WTC11 (cell line): ENCODE measurements at regions of chr17 and their contacts with region 1.

Region 1: GRCh38 chr17:17919169-17920107 is 52.8 kb downstream of the TOM1L2 start:
- DNase-seq: peak; percentile 81
- ATAC-seq: peak; percentile 71
- H3K4me3 Mint-ChIP-seq: no peak overlapping the region
- H3K27ac Mint-ChIP-seq: peak overlapping the region; percentile 44; the same call in 1 of the 2 replicates
- H3K4me1 Mint-ChIP-seq: peaks cover 32% of the 10 kb centered on the region
- H3K27me3 Mint-ChIP-seq: no peaks in the 10 kb centered on the region
- CTCF ChIP-seq: peak; percentile 45

Region 2: GRCh38 chr17:17800504-17801021 is 118.9 kb before region 1 on chr17:
- CTCF ChIA-PET with region 1: interaction called, 19 read pairs
- POLR2A ChIA-PET with region 1: no interaction called
- DNase-seq: no peak
- ATAC-seq: peak; percentile 26
- H3K4me3 Mint-ChIP-seq: no peak overlapping the region
- H3K27ac Mint-ChIP-seq: no peak overlapping the region
- H3K4me1 Mint-ChIP-seq: peaks cover 13% of the 10 kb centered on the region
- H3K27me3 Mint-ChIP-seq: no peaks in the 10 kb centered on the region; the same call in 1 of the 2 replicates
- CTCF ChIP-seq: no peak

Region 3: GRCh38 chr17:17836250-17836817 is 83.1 kb before region 1 on chr17:
- CTCF ChIA-PET with region 1: interaction called, 22 read pairs
- POLR2A ChIA-PET with region 1: interaction called, 5 read pairs
- DNase-seq: peak; percentile 98
- ATAC-seq: peak; percentile 53
- H3K4me3 Mint-ChIP-seq: peak overlapping the region; percentile 69
- H3K27ac Mint-ChIP-seq: peak overlapping the region; percentile 94
- H3K4me1 Mint-ChIP-seq: peaks cover 70% of the 10 kb centered on the region
- H3K27me3 Mint-ChIP-seq: no peaks in the 10 kb centered on the region
- CTCF ChIP-seq: no peak

Region 4: DNA sequence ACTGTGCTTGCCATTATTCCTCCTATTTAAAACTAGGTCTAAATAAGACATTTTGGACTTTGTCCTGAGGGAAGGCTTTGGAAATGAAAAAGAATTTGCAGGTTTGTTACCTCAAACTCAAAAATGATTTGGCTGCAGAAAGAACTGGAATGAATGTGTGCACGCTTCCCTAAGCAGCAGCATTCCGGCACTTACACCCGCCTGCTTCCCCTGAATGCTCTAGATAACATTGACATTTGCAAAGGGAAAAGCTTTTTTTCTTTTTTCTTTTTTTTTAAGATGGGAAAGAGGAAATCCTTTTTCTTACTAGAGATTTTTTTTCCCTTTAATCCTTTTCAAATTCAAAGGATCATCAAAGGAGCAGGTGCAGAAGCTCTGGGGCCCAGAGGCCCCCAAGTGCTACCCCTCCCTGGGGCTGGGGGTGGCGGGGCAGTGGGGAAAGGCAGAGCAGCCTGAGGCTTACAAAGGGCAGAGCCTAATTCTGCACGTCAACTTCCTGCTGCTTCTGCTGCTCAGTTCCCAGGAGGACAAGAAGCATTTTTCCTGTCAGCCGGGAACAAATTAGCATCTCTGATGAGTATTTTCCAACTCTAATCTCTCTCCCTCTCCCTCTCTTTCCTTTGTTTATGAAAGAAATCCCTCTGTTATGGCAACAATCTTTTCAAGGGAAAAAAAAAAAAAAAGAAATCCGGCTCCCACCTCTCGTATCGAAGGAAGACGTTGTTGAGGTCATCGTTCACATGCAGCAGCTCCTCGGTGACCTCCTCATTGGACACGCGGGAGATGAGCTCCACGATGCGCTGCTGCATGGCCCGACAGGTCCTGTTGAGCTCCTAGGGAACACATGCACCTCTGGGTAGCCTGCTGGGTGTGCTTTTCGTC is 50.6 kb before region 1 on chr17:
- CTCF ChIA-PET with region 1: interaction called, 17 read pairs
- POLR2A ChIA-PET with region 1: no interaction called
- DNase-seq: no peak
- ATAC-seq: peak; percentile 80
- H3K4me3 Mint-ChIP-seq: peak overlapping the region; percentile 41
- H3K27ac Mint-ChIP-seq: peak overlapping the region; percentile 71
- H3K4me1 Mint-ChIP-seq: peaks cover 54% of the 10 kb centered on the region
- H3K27me3 Mint-ChIP-seq: peaks cover 16% of the 10 kb centered on the region
- CTCF ChIP-seq: no peak

Region 5: GRCh38 chr17:17890773-17891759 is 28.4 kb before region 1 on chr17:
- CTCF ChIA-PET with region 1: interaction called, 122 read pairs
- POLR2A ChIA-PET with region 1: no interaction called
- DNase-seq: peak; percentile 70
- ATAC-seq: peak; percentile 84
- H3K4me3 Mint-ChIP-seq: no peak overlapping the region
- H3K27ac Mint-ChIP-seq: peak overlapping the region; percentile 71; the same call in 1 of the 2 replicates
- H3K4me1 Mint-ChIP-seq: peaks cover 32% of the 10 kb centered on the region
- H3K27me3 Mint-ChIP-seq: no peaks in the 10 kb centered on the region
- CTCF ChIP-seq: peak; percentile 59

Region 6: DNA sequence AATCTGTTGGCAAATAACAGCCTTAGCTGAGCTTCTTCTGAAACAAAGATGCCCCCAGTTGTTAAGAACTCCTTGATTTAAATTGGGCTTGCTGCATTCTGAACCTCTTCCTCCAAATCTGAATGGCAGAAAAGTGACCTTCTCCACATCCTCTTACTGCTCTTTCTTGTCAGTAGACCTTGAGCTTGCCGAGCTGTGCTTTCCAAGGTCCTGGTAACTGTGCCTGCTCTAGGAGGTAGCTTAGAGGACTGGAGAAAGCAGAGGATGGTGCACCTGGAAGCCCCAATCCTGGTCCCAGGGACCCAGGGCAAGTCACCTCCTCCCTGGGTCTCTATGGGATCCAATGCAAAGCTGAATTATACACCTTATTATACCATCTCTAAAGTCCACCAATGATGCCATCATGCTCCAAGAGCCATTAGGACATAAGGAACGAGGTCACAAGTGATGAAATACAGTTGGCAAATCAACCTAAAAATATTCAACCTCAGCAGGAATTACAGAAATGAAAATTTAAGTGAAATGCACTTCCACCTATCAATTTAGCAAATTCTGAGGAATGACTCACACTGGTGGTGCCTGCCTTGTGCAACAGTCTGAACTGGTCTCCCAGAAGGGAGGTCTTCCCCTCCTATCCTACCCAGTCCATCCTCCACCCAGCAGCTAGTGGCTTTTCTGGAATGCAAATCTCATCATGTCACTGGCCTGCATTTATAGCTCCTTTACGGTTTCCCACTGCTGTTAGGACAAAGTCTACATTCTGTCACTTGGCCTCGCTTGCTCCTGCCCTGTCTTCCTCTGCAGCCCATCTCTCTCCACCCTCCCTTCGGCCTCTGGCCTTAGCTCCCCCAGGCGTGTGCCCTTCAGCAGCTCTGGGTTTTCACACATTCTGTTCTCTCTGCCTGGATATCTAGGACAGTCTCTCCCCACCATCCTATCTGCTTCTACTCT is 16.2 kb after region 1 on chr17:
- CTCF ChIA-PET with region 1: interaction called, 16 read pairs
- POLR2A ChIA-PET with region 1: no interaction called
- DNase-seq: no peak
- ATAC-seq: no peak
- H3K4me3 Mint-ChIP-seq: no peak overlapping the region
- H3K27ac Mint-ChIP-seq: no peak overlapping the region
- H3K4me1 Mint-ChIP-seq: peaks cover 3% of the 10 kb centered on the region; the same call in 1 of the 2 replicates
- H3K27me3 Mint-ChIP-seq: no peaks in the 10 kb centered on the region; the same call in 1 of the 2 replicates
- CTCF ChIP-seq: no peak

Region 7: GRCh38 chr17:17947966-17948365 is 28.5 kb after region 1 on chr17:
- CTCF ChIA-PET with region 1: interaction called, 11 read pairs
- POLR2A ChIA-PET with region 1: no interaction called
- DNase-seq: no peak
- ATAC-seq: no peak
- H3K4me3 Mint-ChIP-seq: no peak overlapping the region
- H3K27ac Mint-ChIP-seq: no peak overlapping the region
- H3K4me1 Mint-ChIP-seq: peaks cover 26% of the 10 kb centered on the region
- H3K27me3 Mint-ChIP-seq: no peaks in the 10 kb centered on the region
- CTCF ChIP-seq: no peak